B cell (primary cell): ENCODE measurements at regions of chr4 and their contacts with region 1.

Region 1: GRCh38 chr4:54050214-54050904 is 14.0 kb downstream of the CHIC2 start:
- DNase-seq: no peak
- ATAC-seq: no peak
- H3K4me3 ChIP-seq: no peak overlapping the region
- H3K4me3 Mint-ChIP-seq: no peak overlapping the region
- H3K27ac ChIP-seq: no peak overlapping the region
- H3K27ac Mint-ChIP-seq: no peak overlapping the region
- H3K4me1 ChIP-seq: peaks cover 0 to 3% of the 10 kb centered on the region in 2 donors
- H3K4me1 Mint-ChIP-seq: peaks cover 24% of the 10 kb centered on the region
- H3K27me3 ChIP-seq: no peaks in the 10 kb centered on the region
- H3K27me3 Mint-ChIP-seq: no peaks in the 10 kb centered on the region
- CTCF ChIP-seq: no peak

Region 2: GRCh38 chr4:53929955-53930798 is 120.2 kb before region 1 on chr4:
- CTCF ChIA-PET with region 1: no interaction called
- POLR2A ChIA-PET with region 1: no interaction called
- intact Hi-C with region 1: no loop called
- DNase-seq: peak; percentile 60
- ATAC-seq: no peak
- H3K4me3 ChIP-seq: no peak overlapping the region
- H3K4me3 Mint-ChIP-seq: no peak overlapping the region
- H3K27ac ChIP-seq: no peak overlapping the region
- H3K27ac Mint-ChIP-seq: no peak overlapping the region
- H3K4me1 ChIP-seq: no peaks in the 10 kb centered on the region
- H3K4me1 Mint-ChIP-seq: no peaks in the 10 kb centered on the region
- H3K27me3 ChIP-seq: peaks cover 0 to 9% (median 3%) of the 10 kb centered on the region in 4 experiments
- H3K27me3 Mint-ChIP-seq: peaks cover 22% of the 10 kb centered on the region
- CTCF ChIP-seq: peak; percentile 64

Region 3: GRCh38 chr4:54014666-54015160 is 35.6 kb before region 1 on chr4:
- CTCF ChIA-PET with region 1: no interaction called
- POLR2A ChIA-PET with region 1: no interaction called
- intact Hi-C with region 1: loop called (anchors 5 kb)
- DNase-seq: no peak
- ATAC-seq: no peak
- H3K4me3 ChIP-seq: no peak overlapping the region
- H3K4me3 Mint-ChIP-seq: no peak overlapping the region
- H3K27ac ChIP-seq: no peak overlapping the region
- H3K27ac Mint-ChIP-seq: no peak overlapping the region
- H3K4me1 ChIP-seq: no peaks in the 10 kb centered on the region
- H3K4me1 Mint-ChIP-seq: peaks cover 2% of the 10 kb centered on the region
- H3K27me3 ChIP-seq: no peaks in the 10 kb centered on the region
- H3K27me3 Mint-ChIP-seq: no peaks in the 10 kb centered on the region
- CTCF ChIP-seq: no peak

Region 4: GRCh38 chr4:54333657-54334056 is 283.3 kb after region 1 on chr4:
- CTCF ChIA-PET with region 1: no interaction called
- POLR2A ChIA-PET with region 1: no interaction called
- intact Hi-C with region 1: no loop called
- DNase-seq: no peak
- ATAC-seq: no peak
- H3K4me3 ChIP-seq: no peak overlapping the region
- H3K4me3 Mint-ChIP-seq: no peak overlapping the region
- H3K27ac ChIP-seq: no peak overlapping the region
- H3K27ac Mint-ChIP-seq: no peak overlapping the region
- H3K4me1 ChIP-seq: no peaks in the 10 kb centered on the region
- H3K4me1 Mint-ChIP-seq: no peaks in the 10 kb centered on the region
- H3K27me3 ChIP-seq: peaks cover 0 to 2% (median 0%) of the 10 kb centered on the region in 4 experiments
- H3K27me3 Mint-ChIP-seq: peaks cover 18% of the 10 kb centered on the region
- CTCF ChIP-seq: no peak